Psoas muscle (tissue), 8 donors: ENCODE measurements at regions of chr9 and their contacts with region 1.

Region 1: GRCh38 chr9:17361378-17361777 is 217.5 kb upstream of the SH3GL2 start:
- DNase-seq: no peak
- ATAC-seq: no peak
- H3K4me3 ChIP-seq: no peak overlapping the region
- H3K27ac ChIP-seq: no peak overlapping the region
- H3K4me1 ChIP-seq: no peaks in the 10 kb centered on the region
- H3K27me3 ChIP-seq: no peaks in the 10 kb centered on the region
- CTCF ChIP-seq: no peak

Region 2: DNA sequence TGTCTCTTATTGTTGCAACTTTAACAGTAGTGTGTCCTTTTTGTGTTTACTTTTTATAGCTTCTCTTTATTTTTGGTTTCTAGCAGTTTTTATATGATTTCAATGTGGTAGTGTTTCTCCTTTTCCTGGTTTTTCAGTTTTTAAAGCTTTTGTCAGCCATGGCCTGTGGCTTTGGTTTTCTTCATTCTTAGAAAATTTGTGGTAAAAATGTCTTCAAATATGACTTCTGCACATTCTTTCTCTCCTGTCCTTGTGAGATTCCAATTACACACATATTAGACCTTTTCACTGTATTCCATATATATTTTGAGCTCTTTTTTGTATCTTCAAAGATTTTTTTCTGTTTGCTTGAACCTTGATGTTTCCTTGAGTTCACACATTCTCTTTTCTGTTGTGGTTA is 46.0 kb before region 1 on chr9:
- intact Hi-C with region 1: loop called in 1 of 2 experiments (anchors 2 kb)
- DNase-seq: no peak
- ATAC-seq: no peak
- H3K4me3 ChIP-seq: no peak overlapping the region
- H3K27ac ChIP-seq: no peak overlapping the region
- H3K4me1 ChIP-seq: no peaks in the 10 kb centered on the region
- H3K27me3 ChIP-seq: no peaks in the 10 kb centered on the region
- CTCF ChIP-seq: no peak

Region 3: GRCh38 chr9:17487467-17487866 is 126.1 kb after region 1 on chr9:
- intact Hi-C with region 1: no loop called
- DNase-seq: no peak
- ATAC-seq: no peak
- H3K4me3 ChIP-seq: no peak overlapping the region
- H3K27ac ChIP-seq: no peak overlapping the region
- H3K4me1 ChIP-seq: no peaks in the 10 kb centered on the region
- H3K27me3 ChIP-seq: no peaks in the 10 kb centered on the region
- CTCF ChIP-seq: no peak